Transverse colon (tissue), 4 donors: ENCODE measurements at regions of chr4 and their contacts with region 1.

Region 1: DNA sequence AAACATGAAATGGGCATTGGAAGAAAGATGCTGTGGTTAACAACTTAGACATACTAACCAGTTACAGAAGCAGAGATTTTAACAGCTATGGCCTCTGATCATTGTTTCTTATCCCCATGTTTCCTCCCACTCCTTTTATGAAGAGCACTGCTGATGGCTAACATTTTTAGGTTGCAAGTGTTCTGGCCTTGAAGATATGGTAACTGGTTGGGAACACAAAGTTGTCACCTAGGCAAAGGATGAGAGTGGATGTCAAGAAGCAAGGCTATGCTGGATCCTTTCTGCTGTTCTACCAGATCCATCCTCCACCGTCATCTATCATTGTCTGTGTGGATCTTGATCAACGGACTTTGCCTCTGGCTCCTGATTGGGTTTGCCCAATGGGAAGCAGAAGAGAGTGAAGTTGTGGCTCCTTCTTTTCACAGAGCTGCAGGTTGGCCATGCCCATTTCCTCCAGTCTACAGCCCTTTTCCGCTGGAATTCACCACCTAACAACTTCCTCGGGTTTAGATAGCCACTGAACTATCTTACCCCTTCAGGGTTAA is 48.9 kb upstream of the SPP1 start:
- DNase-seq: no peak
- H3K4me3 ChIP-seq: no peak overlapping the region
- H3K27ac ChIP-seq: no peak overlapping the region
- H3K4me1 ChIP-seq: no peaks in the 10 kb centered on the region
- H3K27me3 ChIP-seq: no peaks in the 10 kb centered on the region
- CTCF ChIP-seq: no peak
- EP300 ChIP-seq: no peak
- POLR2A ChIP-seq: no peak

Region 2: DNA sequence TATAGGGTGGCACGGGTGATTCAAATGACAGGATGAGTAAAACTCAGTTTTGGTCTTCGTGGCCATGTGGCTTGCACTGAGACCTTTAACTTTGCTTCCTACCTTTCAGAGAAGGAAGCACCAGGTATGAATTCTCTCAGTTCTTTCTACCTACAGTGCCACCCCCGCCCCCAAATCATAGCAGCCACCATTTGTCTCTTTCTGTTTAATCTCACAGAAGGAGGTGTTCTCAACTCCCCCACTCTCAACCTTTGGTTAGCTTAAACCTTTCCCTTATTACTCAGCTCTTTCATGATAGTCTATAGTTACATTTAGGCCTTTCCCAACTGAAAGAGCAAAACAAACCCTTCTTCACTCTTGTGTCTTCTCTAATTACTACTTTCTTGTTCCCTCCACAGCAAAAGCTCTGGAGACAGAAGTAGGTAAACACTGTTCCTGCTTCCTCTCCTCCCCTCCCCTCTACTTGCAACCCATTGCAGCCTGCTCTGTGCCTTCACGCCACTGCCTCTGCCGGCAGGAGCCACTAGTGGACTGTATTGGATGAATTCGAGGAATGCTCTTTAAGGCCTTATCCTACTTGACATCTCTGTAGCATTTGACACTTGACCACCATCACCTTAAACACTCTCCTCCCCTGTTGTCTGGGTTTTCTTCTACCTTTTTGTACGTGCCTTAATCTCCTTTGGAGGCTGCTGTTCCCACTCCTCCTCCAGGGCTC is 868.1 kb before region 1 on chr4:
- in situ Hi-C with region 1: no loop called
- intact Hi-C with region 1: no loop called
- DNase-seq: no peak
- H3K4me3 ChIP-seq: no peak overlapping the region
- H3K27ac ChIP-seq: peak overlapping the region; percentile 71 to 84 (median 78)
- H3K4me1 ChIP-seq: peaks cover 53 to 80% (median 75%) of the 10 kb centered on the region in 4 donors
- H3K27me3 ChIP-seq: no peaks in the 10 kb centered on the region
- CTCF ChIP-seq: peak in 2 of 5 experiments; percentile 17 to 32
- EP300 ChIP-seq: no peak
- POLR2A ChIP-seq: no peak

Region 3: GRCh38 chr4:87938746-87939145 is 12.1 kb after region 1 on chr4:
- in situ Hi-C with region 1: no loop called
- intact Hi-C with region 1: loop called (anchors 1 kb)
- DNase-seq: no peak
- H3K4me3 ChIP-seq: no peak overlapping the region
- H3K27ac ChIP-seq: no peak overlapping the region
- H3K4me1 ChIP-seq: no peaks in the 10 kb centered on the region
- H3K27me3 ChIP-seq: no peaks in the 10 kb centered on the region
- CTCF ChIP-seq: no peak
- EP300 ChIP-seq: no peak
- POLR2A ChIP-seq: no peak

Region 4: DNA sequence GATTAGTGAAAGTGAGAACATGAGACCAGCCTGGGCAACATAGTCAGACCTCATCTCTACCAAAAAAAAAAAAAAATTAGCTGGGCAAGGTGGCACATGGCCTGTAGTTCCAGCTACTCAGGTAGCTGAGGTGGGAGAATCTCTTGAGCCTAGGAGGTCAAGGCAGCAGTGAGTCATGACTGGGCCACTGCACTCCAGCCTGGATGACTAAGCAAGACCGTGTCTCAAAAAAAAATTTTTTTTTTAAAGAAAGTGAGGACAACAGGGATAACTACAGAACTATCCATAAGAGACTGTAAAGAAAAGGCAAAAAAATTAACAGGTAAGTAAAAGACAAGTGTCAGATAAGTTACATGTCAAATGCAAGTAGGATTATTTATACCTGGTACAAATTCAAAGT is 35.4 kb after region 1 on chr4:
- in situ Hi-C with region 1: no loop called
- intact Hi-C with region 1: no loop called
- DNase-seq: no peak
- H3K4me3 ChIP-seq: no peak overlapping the region
- H3K27ac ChIP-seq: no peak overlapping the region
- H3K4me1 ChIP-seq: no peaks in the 10 kb centered on the region
- H3K27me3 ChIP-seq: no peaks in the 10 kb centered on the region
- CTCF ChIP-seq: no peak
- EP300 ChIP-seq: no peak
- POLR2A ChIP-seq: no peak